ENCODE measurements at regions of chr2 and their contacts with region 1.

Region 1: GRCh38 chr2:203155406-203155805 is 83.4 kb upstream of the CYP20A1 start:
- DNase-seq: peak; percentile 20
- ATAC-seq: peak; percentile 30
- H3K4me3 Mint-ChIP-seq: no peak overlapping the region
- H3K27ac Mint-ChIP-seq: no peak overlapping the region
- H3K4me1 Mint-ChIP-seq: peaks cover 10% of the 10 kb centered on the region
- H3K27me3 Mint-ChIP-seq: no peaks in the 10 kb centered on the region

Region 2: DNA sequence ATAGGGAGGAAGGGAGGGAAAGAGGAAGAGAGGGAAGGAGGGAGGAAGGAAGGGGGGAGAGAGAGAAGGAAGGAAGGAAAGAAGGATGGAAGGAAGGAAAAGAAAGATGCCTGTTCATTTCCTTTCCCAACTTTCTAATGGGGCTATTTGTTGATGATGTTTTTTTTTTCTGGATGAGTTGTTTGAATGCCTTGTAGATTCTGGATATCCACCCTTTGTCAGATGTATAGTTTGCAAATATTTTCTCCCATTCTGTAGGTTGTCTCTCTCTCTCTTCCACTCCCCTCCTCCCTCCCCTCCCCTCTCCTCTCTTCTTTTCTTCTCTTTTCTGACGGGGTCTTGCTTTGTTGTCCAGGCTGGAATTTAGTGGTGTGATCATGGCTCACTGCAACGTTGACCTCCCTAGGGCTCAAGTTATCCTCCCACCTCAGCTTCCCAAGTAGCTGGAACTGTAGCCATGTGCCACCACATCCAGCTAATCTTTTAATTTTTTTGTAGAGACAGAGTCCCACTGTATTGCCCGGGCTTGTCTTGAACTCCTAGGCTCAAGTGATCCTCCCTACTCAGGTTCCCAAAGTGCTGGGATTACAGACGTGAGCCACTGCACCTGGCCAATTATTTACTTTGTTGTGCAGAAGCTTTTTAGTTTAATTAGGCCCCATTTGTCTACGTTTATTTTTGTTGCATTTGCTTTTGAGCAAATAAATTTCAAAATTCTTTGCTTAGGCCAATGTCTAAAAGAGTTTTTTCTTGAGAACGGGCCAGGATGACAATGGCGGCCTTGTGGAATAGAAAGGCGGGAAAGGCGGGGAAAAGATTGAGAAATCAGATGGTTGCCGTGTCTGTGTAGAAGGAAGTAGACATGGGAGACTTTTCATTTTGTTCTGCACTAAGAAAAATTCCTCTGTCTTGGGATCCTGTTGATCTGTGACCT is 577.9 kb before region 1 on chr2:
- CTCF ChIA-PET with region 1: no interaction called
- POLR2A ChIA-PET with region 1: no interaction called
- intact Hi-C with region 1: loop called in 1 of 2 experiments (anchors 10 kb)
- DNase-seq: no peak
- ATAC-seq: no peak
- H3K4me3 Mint-ChIP-seq: no peak overlapping the region
- H3K27ac Mint-ChIP-seq: no peak overlapping the region
- H3K4me1 Mint-ChIP-seq: peaks cover 1% of the 10 kb centered on the region
- H3K27me3 Mint-ChIP-seq: no peaks in the 10 kb centered on the region

Region 3: DNA sequence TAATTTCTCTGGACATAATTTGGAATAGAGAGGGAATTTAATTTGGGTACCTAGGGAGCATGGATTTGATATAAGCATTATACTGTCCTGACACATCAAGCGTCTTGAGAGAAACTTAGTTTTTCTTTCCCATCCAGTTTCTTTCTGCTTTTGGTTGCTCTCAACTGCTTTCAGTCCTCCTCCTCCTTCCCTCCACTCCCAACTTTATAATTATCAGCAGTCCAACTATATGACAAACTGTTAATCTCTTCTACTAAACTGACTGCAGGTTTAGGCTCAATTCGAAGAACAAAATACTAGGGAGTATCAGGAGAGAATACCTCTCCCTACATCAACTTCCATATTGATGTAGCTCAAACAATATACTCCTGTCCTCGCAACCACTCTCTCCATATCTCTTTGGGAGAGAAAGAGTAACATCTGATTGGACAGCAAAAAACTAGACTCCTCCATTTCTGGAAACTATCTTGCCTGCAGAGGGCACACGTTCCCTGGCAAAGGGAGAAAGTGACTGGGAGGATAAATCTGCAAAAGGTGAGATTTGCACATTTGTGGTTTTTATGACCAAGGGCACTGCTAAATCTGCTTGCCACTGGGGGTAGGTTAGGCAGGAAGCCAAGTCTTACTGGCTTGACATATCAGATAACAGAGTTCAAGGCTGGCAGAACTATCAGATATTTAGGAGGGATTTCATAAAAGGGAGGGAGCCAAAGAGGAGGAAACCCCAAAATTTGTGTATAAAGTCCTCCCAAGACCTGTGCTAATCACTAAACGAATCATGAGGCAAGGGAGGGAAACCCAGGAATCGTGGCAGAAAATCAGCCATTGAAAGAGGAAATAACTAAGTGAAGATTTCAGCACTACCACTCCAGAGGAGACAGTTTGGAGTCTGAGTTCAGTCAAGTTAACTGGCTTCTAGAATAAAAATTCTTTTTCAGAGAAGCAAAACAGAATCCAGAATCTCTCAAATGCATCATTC is 323.9 kb before region 1 on chr2:
- CTCF ChIA-PET with region 1: no interaction called
- POLR2A ChIA-PET with region 1: no interaction called
- intact Hi-C with region 1: loop called in 1 of 2 experiments (anchors 5 kb)
- DNase-seq: peak; percentile 73
- ATAC-seq: peak; percentile 97
- H3K4me3 Mint-ChIP-seq: no peak overlapping the region
- H3K27ac Mint-ChIP-seq: no peak overlapping the region
- H3K4me1 Mint-ChIP-seq: peaks cover 10% of the 10 kb centered on the region
- H3K27me3 Mint-ChIP-seq: no peaks in the 10 kb centered on the region

Region 4: GRCh38 chr2:203112342-203112741 is 43.1 kb before region 1 on chr2:
- CTCF ChIA-PET with region 1: no interaction called
- POLR2A ChIA-PET with region 1: no interaction called
- intact Hi-C with region 1: no loop called
- DNase-seq: no peak
- ATAC-seq: no peak
- H3K4me3 Mint-ChIP-seq: no peak overlapping the region
- H3K27ac Mint-ChIP-seq: no peak overlapping the region
- H3K4me1 Mint-ChIP-seq: no peaks in the 10 kb centered on the region
- H3K27me3 Mint-ChIP-seq: no peaks in the 10 kb centered on the region

Region 5: DNA sequence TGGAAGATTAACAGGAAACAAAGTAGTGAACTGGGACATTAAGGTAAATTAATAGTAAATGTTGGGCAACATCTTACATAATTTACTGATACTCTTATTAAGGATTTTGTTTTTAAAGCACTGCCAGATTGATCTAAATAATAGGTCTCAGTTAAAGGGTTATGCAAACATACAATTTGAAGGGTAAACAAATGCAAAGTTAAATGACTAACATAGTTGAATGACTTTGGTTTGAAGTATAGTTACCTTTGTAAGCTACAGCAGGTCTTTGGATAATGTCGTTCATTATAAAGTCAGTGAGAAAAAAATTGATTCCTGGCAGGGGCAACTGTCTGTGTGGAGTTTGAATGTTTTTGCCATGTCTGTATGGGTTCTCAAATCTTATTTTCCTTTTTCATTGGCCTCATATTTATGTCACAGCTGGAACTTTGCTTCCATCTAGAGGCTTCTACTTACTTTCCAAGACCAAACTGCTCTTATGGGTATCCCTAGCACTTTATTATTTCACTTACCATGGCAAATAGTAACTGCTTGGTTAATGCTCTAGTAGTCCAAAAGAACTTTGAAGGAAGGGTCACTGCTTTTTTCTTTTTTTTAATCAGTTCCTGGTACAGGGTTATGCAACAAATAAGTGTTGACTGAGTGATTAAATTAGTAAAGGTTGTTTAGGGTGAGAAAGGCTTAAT is 33.0 kb before region 1 on chr2:
- CTCF ChIA-PET with region 1: no interaction called
- POLR2A ChIA-PET with region 1: no interaction called
- intact Hi-C with region 1: no loop called
- DNase-seq: no peak
- ATAC-seq: no peak
- H3K4me3 Mint-ChIP-seq: no peak overlapping the region
- H3K27ac Mint-ChIP-seq: no peak overlapping the region
- H3K4me1 Mint-ChIP-seq: no peaks in the 10 kb centered on the region
- H3K27me3 Mint-ChIP-seq: no peaks in the 10 kb centered on the region

Measured in activated CD4-positive, alpha-beta T cell treated with anti-CD3 and anti-CD28 coated beads for 36 hours (primary cell).